MCF 10A (cell line): ENCODE measurements at regions of chr12 and their contacts with region 1.

Region 1: DNA sequence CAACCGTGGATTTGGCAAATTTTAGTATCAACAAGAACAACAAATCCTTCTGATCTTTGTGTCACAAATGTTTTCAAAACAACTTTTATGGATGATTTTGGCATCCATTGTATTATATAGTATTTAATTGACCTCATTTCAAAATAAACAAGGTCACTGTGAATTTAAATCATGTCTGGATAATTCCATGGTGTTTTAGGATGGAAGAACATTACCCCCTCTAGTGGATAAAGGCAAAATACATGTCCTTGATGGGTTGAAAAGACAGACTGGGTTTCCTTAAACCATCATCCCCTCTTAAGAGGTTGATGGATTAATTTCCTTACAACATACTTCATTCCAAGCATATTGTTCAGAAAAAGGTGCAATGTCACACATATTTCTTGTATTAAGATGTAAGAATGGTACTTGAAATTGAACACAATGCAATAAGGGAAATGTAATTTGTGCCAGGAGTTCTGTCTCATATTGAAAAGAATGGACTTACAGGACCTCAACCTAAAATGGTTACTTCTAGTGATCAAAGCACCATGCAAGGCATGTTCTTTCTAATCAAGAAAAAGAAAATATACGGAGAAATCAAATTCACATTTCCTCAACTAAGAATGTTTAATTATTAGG is 352.0 kb downstream of the BCAT1 start:
- DNase-seq: peak; percentile 54
- H3K4me3 Mint-ChIP-seq: no peak overlapping the region
- H3K27ac Mint-ChIP-seq: no peak overlapping the region
- H3K4me1 Mint-ChIP-seq: peaks cover 6% of the 10 kb centered on the region
- H3K27me3 Mint-ChIP-seq: peaks cover 22% of the 10 kb centered on the region
- CTCF ChIP-seq: peak; percentile 53

Region 2: DNA sequence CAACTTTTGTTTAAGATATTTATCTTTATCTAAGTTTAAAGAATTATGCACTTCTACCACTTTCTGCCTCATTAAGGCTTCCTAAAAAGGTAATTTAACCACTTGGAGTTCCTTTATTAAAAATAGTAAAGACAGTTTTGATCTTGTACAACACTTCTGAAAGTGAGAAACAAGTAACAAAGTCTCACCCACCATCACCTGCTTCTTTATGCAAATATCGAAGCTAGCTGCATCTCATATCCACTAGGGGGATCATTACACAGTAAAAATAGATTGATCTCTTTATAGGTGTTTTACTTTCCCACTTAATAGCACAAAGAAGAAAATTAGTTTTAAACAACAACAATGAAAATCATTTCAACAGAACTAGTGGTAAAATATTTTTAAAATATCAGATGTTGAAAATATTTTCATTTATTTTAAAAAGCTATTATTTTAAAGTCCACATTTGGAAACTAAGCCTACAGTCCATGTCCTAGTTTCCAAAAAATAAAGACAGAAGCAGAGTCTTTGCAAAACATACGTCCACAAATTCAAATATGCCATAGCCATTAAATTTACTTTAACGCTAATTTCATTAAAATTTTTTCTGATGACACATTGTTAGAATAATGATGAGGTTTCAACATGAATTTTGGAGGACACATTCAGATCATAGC is 487.4 kb before region 1 on chr12:
- CTCF ChIA-PET with region 1: interaction called, 4 read pairs
- POLR2A ChIA-PET with region 1: no interaction called
- intact Hi-C with region 1: loop called (anchors 2 kb)
- DNase-seq: peak; percentile 27
- H3K4me3 Mint-ChIP-seq: no peak overlapping the region
- H3K27ac Mint-ChIP-seq: no peak overlapping the region
- H3K4me1 Mint-ChIP-seq: no peaks in the 10 kb centered on the region
- H3K27me3 Mint-ChIP-seq: no peaks in the 10 kb centered on the region
- CTCF ChIP-seq: peak; percentile 36

Region 3: DNA sequence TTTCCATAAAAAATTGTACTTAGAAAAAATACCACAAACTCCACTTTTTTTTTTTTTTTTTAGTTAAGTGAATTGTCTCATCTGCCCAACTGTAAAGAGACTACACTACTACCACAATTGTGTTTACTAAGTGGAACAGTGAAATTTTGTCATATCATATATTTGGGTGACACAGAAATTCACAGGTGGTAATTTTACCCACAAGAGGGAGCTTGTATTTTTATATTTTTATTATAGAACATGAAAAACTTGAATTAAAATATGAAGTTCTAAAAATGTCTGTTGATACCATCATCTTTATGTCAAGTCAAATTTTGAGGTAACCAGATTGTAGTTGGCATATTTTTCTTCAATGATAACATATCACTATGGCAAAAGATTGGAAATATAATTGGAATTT is 318.0 kb before region 1 on chr12:
- CTCF ChIA-PET with region 1: no interaction called
- POLR2A ChIA-PET with region 1: no interaction called
- intact Hi-C with region 1: loop called (anchors 2 kb)
- DNase-seq: no peak
- H3K4me3 Mint-ChIP-seq: no peak overlapping the region
- H3K27ac Mint-ChIP-seq: no peak overlapping the region
- H3K4me1 Mint-ChIP-seq: no peaks in the 10 kb centered on the region
- H3K27me3 Mint-ChIP-seq: peaks cover 16% of the 10 kb centered on the region
- CTCF ChIP-seq: no peak

Region 4: DNA sequence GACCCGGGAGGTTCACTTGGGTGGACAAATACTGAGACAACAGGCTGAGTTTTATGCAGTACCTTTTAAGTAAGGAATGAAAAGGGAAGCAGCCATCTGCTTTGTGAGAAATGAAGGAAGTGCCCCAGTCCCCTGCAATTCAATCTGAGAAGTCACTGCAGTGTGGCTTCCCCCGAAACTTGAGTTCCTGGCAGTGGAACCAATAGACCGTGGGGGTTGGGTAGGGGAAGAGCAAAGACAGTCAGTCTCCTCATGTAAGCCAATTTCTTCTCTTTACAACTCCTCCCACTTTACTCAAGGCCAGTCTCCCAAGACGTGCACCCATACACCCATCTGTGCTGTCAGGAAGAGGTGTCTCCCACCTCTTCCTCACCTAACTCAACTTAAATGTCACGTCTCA is 145.5 kb after region 1 on chr12:
- CTCF ChIA-PET with region 1: no interaction called
- POLR2A ChIA-PET with region 1: no interaction called
- intact Hi-C with region 1: no loop called
- DNase-seq: no peak
- H3K4me3 Mint-ChIP-seq: no peak overlapping the region
- H3K27ac Mint-ChIP-seq: no peak overlapping the region
- H3K4me1 Mint-ChIP-seq: no peaks in the 10 kb centered on the region
- H3K27me3 Mint-ChIP-seq: no peaks in the 10 kb centered on the region
- CTCF ChIP-seq: no peak

Region 5: GRCh38 chr12:25023808-25024207 is 426.9 kb after region 1 on chr12:
- CTCF ChIA-PET with region 1: no interaction called
- POLR2A ChIA-PET with region 1: no interaction called
- intact Hi-C with region 1: no loop called
- DNase-seq: no peak
- H3K4me3 Mint-ChIP-seq: no peak overlapping the region
- H3K27ac Mint-ChIP-seq: no peak overlapping the region
- H3K4me1 Mint-ChIP-seq: no peaks in the 10 kb centered on the region
- H3K27me3 Mint-ChIP-seq: no peaks in the 10 kb centered on the region
- CTCF ChIP-seq: no peak